ENCODE measurements at regions of chr2 and their contacts with region 1.

Region 1: GRCh38 chr2:147275943-147276342 is 568.9 kb upstream of the ACVR2A start:
- DNase-seq: peak; percentile 21
- ATAC-seq: no peak
- H3K4me3 ChIP-seq: no peak overlapping the region
- H3K27ac ChIP-seq: no peak overlapping the region
- H3K4me1 ChIP-seq: peaks cover 31% of the 10 kb centered on the region
- H3K27me3 ChIP-seq: no peaks in the 10 kb centered on the region
- CTCF ChIP-seq: peak; percentile 44; the same call in 1 of the 2 replicates

Region 2: GRCh38 chr2:147082850-147083522 is 193.0 kb before region 1 on chr2:
- CTCF ChIA-PET with region 1: no interaction called
- POLR2A ChIA-PET with region 1: no interaction called
- intact Hi-C with region 1: loop called (anchors 10 kb)
- DNase-seq: peak; percentile 87
- ATAC-seq: peak; percentile 67
- H3K4me3 ChIP-seq: no peak overlapping the region
- H3K27ac ChIP-seq: no peak overlapping the region
- H3K4me1 ChIP-seq: no peaks in the 10 kb centered on the region
- H3K27me3 ChIP-seq: no peaks in the 10 kb centered on the region
- CTCF ChIP-seq: peak; percentile 96

Region 3: GRCh38 chr2:147135376-147135775 is 140.6 kb before region 1 on chr2:
- CTCF ChIA-PET with region 1: no interaction called
- POLR2A ChIA-PET with region 1: no interaction called
- intact Hi-C with region 1: loop called (anchors 5 kb)
- DNase-seq: no peak
- ATAC-seq: no peak
- H3K4me3 ChIP-seq: no peak overlapping the region
- H3K27ac ChIP-seq: no peak overlapping the region
- H3K4me1 ChIP-seq: peaks cover 27% of the 10 kb centered on the region
- H3K27me3 ChIP-seq: no peaks in the 10 kb centered on the region
- CTCF ChIP-seq: no peak

Region 4: GRCh38 chr2:147525819-147526489 is 250.0 kb after region 1 on chr2:
- CTCF ChIA-PET with region 1: no interaction called
- POLR2A ChIA-PET with region 1: no interaction called
- intact Hi-C with region 1: no loop called
- DNase-seq: peak; percentile 46
- ATAC-seq: peak; percentile 24
- H3K4me3 ChIP-seq: no peak overlapping the region
- H3K27ac ChIP-seq: no peak overlapping the region
- H3K4me1 ChIP-seq: peaks cover 14% of the 10 kb centered on the region
- H3K27me3 ChIP-seq: no peaks in the 10 kb centered on the region
- CTCF ChIP-seq: no peak